CD14-positive monocyte (primary cell): ENCODE measurements at regions of chr5 and their contacts with region 1.

Region 1: GRCh38 chr5:81851481-81852178 is 100.7 kb upstream of the SSBP2 start:
- DNase-seq: peak; percentile 86 to 92 (median 87)
- H3K4me3 ChIP-seq: peak overlapping the region; percentile 57 to 80 (median 57)
- H3K4me3 Mint-ChIP-seq: peak overlapping the region; percentile 87 to 95
- H3K27ac ChIP-seq: peak overlapping the region; percentile 80 to 87
- H3K27ac Mint-ChIP-seq: peak overlapping the region; percentile 86 to 98 (median 94)
- H3K4me1 ChIP-seq: peaks cover 34 to 42% of the 10 kb centered on the region in 2 donors
- H3K4me1 Mint-ChIP-seq: peaks cover 46% of the 10 kb centered on the region
- H3K27me3 ChIP-seq: no peaks in the 10 kb centered on the region
- H3K27me3 Mint-ChIP-seq: peaks cover 0 to 2% (median 0%) of the 10 kb centered on the region in 3 donors
- CTCF ChIP-seq: no peak

Region 2: DNA sequence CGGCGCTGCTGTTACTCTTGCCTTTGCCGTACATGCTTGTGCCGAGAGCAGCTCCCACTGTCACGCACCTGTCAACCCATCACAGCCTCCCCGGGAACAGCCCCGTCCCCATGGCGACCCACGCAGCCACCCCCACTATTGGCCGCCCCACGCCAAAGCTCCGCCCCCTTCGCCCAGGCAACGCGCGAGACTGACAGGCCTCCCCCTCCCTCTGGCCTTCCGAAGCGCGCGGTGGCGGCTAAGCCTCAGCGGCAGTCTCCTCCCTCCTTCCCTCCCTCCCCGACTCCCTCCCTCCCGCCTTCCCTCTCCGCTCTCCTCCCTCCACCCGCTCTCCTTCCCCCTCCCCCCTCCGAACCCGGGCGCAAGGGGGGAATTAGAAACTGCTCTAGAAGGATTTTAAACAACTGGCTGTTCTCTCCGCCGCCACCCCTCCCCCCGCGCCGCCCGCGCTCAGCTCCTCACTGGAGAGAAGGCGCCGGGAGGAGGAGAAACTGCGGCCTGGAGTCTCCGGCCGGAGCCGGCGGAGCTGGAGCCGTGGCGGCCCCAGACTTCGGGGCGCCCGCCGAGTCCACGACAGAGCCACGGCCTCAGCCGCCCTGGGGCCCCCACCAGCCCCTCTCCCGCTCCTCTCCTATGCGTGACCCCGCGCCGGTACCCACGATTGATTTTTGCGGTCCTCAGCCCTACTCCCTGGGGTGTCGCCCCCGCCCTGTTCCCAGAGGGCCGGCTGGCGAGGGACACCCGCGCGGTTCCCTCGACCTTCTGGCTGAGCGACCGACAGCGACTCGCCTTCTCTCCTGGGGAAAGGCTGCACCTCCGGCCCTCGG is 100.4 kb before region 1 on chr5 and contains the start of gene SSBP2:
- intact Hi-C with region 1: loop called (anchors 1 kb)
- DNase-seq: peak; percentile 95 to 100 (median 99)
- H3K4me3 ChIP-seq: peak within 1 kb of the TSS; percentile 83 to 88 (median 85)
- H3K4me3 Mint-ChIP-seq: peak within 1 kb of the TSS; percentile 95 to 99
- H3K27ac ChIP-seq: peak within 1 kb of the TSS; percentile 86 to 88
- H3K27ac Mint-ChIP-seq: peak within 1 kb of the TSS; percentile 84 to 94 (median 92)
- H3K4me1 ChIP-seq: peaks cover 12 to 18% of the 10 kb centered on the region in 2 donors
- H3K4me1 Mint-ChIP-seq: peaks cover 28% of the 10 kb centered on the region
- H3K27me3 ChIP-seq: peaks cover 4 to 5% of the 10 kb centered on the region in 2 donors
- H3K27me3 Mint-ChIP-seq: peaks cover 2 to 13% (median 5%) of the 10 kb centered on the region in 3 donors
- CTCF ChIP-seq: no peak
- polyA plus RNA-seq, gene SSBP2: 29.1 to 55.2 (median 53.4) TPM

Region 3: GRCh38 chr5:81898403-81898802 is 46.8 kb after region 1 on chr5:
- intact Hi-C with region 1: loop called in 1 of 2 experiments (anchors 2 kb)
- DNase-seq: peak; percentile 64 to 93 (median 89)
- H3K4me3 ChIP-seq: peak overlapping the region in 1 of 3 experiments; percentile 53
- H3K4me3 Mint-ChIP-seq: peak overlapping the region in 1 of 2 donors; percentile 71
- H3K27ac ChIP-seq: peak overlapping the region in 1 of 2 donors; percentile 91
- H3K27ac Mint-ChIP-seq: peak overlapping the region; percentile 83 to 94 (median 87)
- H3K4me1 ChIP-seq: peaks cover 51 to 58% of the 10 kb centered on the region in 2 donors
- H3K4me1 Mint-ChIP-seq: peaks cover 46% of the 10 kb centered on the region
- H3K27me3 ChIP-seq: no peaks in the 10 kb centered on the region
- H3K27me3 Mint-ChIP-seq: no peaks in the 10 kb centered on the region
- CTCF ChIP-seq: no peak

Region 4: DNA sequence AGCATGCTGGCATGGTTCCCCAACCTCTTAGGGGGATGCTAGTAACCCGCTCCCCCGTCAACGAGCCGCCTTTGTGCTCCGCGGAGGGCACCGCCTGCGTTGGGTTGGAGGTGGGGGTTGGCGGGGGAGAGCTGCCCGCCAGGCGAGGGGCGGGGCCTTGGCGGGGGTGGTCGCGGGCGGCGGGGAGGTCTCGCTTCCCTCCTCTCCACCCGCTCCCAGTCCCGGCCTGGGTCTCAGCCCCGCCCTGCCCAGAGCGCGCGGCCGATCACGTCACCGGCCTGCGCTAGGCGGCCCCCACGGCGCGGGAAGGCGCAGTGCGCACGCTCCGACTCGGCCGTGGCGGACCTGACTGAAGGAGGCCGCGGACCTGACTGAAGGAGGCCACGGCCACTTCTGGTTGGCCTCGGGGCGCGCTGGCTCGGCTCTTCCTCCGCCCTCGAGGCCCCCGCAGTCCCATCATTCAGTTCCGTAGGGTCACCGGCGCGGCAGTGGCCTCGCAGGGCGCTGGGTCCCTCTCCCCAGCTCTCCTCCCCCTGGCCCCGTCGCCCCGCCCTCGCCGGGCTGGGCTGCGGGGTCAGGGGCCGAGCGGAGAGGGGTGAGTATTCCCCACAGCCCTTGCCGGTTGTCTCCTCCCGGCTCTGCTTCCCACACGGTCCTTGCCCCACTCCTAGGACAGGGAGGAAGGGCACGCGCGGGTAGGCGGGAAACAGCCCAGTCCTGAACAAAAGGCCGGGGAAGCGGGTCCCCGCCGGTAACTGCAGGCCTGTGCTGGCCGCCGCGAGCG is 120.3 kb after region 1 on chr5 and contains the start of gene ATG10:
- intact Hi-C with region 1: loop called in 1 of 2 experiments (anchors 10 kb)
- DNase-seq: peak; percentile 84 to 87 (median 85)
- H3K4me3 ChIP-seq: peak within 1 kb of the TSS; percentile 81 to 99 (median 91)
- H3K4me3 Mint-ChIP-seq: peak within 1 kb of the TSS; percentile 87 to 94
- H3K27ac ChIP-seq: peak within 1 kb of the TSS; percentile 82 to 94
- H3K27ac Mint-ChIP-seq: peak within 1 kb of the TSS; percentile 92 to 97 (median 95)
- H3K4me1 ChIP-seq: peaks cover 8 to 16% of the 10 kb centered on the region in 2 donors
- H3K4me1 Mint-ChIP-seq: peaks cover 26% of the 10 kb centered on the region
- H3K27me3 ChIP-seq: no peaks in the 10 kb centered on the region
- H3K27me3 Mint-ChIP-seq: peaks cover 0 to 3% (median 2%) of the 10 kb centered on the region in 3 donors
- CTCF ChIP-seq: no peak
- polyA plus RNA-seq, gene ATG10: 2.1 to 7.9 (median 5.6) TPM

Region 5: GRCh38 chr5:83197326-83197967 is 1345.8 kb after region 1 on chr5:
- intact Hi-C with region 1: no loop called
- DNase-seq: no peak
- H3K4me3 ChIP-seq: no peak overlapping the region
- H3K4me3 Mint-ChIP-seq: no peak overlapping the region
- H3K27ac ChIP-seq: no peak overlapping the region
- H3K27ac Mint-ChIP-seq: no peak overlapping the region
- H3K4me1 ChIP-seq: no peaks in the 10 kb centered on the region
- H3K4me1 Mint-ChIP-seq: no peaks in the 10 kb centered on the region
- H3K27me3 ChIP-seq: no peaks in the 10 kb centered on the region
- H3K27me3 Mint-ChIP-seq: no peaks in the 10 kb centered on the region
- CTCF ChIP-seq: no peak